GM12878 (cell line): ENCODE measurements at regions of chr18 and their contacts with region 1.

Region 1: DNA sequence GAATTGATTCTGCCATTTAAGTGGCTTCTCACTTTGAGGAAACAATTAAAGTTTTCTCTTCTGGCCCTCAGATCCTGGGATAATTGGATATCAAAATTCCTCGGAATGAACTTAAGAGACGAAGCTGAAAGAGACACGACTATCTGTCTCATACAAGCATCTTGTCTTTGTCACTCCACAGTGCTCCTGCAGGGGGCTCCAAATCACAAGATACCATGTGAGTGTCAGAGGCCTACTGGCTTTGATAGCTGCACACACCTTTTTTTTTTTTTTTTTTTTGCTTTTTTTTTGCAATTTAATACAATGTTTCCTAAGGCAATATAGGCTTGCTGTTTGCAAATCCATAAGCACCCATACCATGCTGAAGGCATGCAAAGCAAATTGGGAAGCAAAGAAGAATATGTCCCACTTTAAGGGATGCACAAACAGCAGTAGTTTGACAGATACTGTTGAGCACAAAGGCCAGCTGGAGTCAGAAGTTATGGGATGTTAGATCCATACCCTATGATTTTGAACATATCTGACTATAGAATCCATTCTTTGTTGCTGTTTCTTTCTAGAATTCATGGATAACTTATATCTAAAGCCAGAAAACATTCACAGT is 109.0 kb upstream of the CBLN2 start:
- DNase-seq: no peak
- ATAC-seq: peak; percentile 99
- H3K4me3 ChIP-seq: no peak overlapping the region
- H3K27ac ChIP-seq: no peak overlapping the region
- H3K4me1 ChIP-seq: no peaks in the 10 kb centered on the region
- H3K27me3 ChIP-seq: no peaks in the 10 kb centered on the region
- CTCF ChIP-seq: peak; percentile 71 to 84 (median 73)
- EP300 ChIP-seq: no peak
- POLR2A ChIP-seq: no peak
- RAD21 ChIP-seq: peak; percentile 82

Region 2: DNA sequence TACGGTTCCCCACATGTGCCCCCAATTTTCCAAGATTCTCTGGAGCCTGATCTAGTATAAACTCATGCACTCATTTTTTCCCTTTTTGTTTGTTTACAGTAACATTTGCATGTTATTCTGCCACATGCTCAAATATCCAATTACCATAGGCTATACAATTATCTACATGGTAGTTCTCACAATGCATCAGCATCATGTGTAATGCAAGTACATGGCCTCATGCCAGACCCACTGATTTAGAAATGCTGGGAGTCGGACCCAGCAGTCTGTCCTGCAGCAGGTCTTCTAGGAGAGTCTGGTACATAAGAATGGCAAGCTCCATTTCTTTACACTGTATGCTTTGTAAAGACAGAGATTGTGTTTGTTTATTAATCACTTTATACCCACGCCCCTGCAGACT is 216.7 kb before region 1 on chr18:
- CTCF ChIA-PET with region 1: no interaction called
- POLR2A ChIA-PET with region 1: no interaction called
- RAD21 ChIA-PET with region 1: no interaction called
- SMC1A ChIA-PET with region 1: no interaction called
- in situ Hi-C with region 1: no loop called
- intact Hi-C with region 1: no loop called
- DNase-seq: no peak
- ATAC-seq: no peak
- H3K4me3 ChIP-seq: no peak overlapping the region
- H3K27ac ChIP-seq: no peak overlapping the region
- H3K4me1 ChIP-seq: no peaks in the 10 kb centered on the region
- H3K27me3 ChIP-seq: no peaks in the 10 kb centered on the region
- CTCF ChIP-seq: no peak
- EP300 ChIP-seq: no peak
- POLR2A ChIP-seq: no peak
- RAD21 ChIP-seq: no peak

Region 3: GRCh38 chr18:72720116-72720515 is 67.0 kb after region 1 on chr18:
- CTCF ChIA-PET with region 1: no interaction called
- POLR2A ChIA-PET with region 1: no interaction called
- RAD21 ChIA-PET with region 1: no interaction called
- SMC1A ChIA-PET with region 1: interaction called, 3 read pairs
- in situ Hi-C with region 1: no loop called
- intact Hi-C with region 1: loop called (anchors 10 kb)
- DNase-seq: no peak
- ATAC-seq: no peak
- H3K4me3 ChIP-seq: no peak overlapping the region
- H3K27ac ChIP-seq: no peak overlapping the region
- H3K4me1 ChIP-seq: no peaks in the 10 kb centered on the region
- H3K27me3 ChIP-seq: no peaks in the 10 kb centered on the region
- CTCF ChIP-seq: no peak
- EP300 ChIP-seq: no peak
- POLR2A ChIP-seq: no peak
- RAD21 ChIP-seq: no peak

Region 4: GRCh38 chr18:73842795-73843394 is 1189.8 kb after region 1 on chr18:
- CTCF ChIA-PET with region 1: no interaction called
- POLR2A ChIA-PET with region 1: no interaction called
- RAD21 ChIA-PET with region 1: no interaction called
- SMC1A ChIA-PET with region 1: no interaction called
- in situ Hi-C with region 1: no loop called
- intact Hi-C with region 1: loop called (anchors 5 kb)
- DNase-seq: peak; percentile 1
- ATAC-seq: peak; percentile 81
- H3K4me3 ChIP-seq: no peak overlapping the region
- H3K27ac ChIP-seq: no peak overlapping the region
- H3K4me1 ChIP-seq: no peaks in the 10 kb centered on the region
- H3K27me3 ChIP-seq: no peaks in the 10 kb centered on the region
- CTCF ChIP-seq: peak; percentile 80 to 93 (median 93)
- EP300 ChIP-seq: no peak
- POLR2A ChIP-seq: no peak
- RAD21 ChIP-seq: peak; percentile 83